AG04449 (cell line): ENCODE measurements at regions of chr16 and their contacts with region 1.

Region 1: GRCh38 chr16:88856828-88857733 is at the starts of genes GALNS and TRAPPC2L:
- DNase-seq: peak; percentile 29
- H3K4me3 ChIP-seq: peak within 1 kb of the TSS; percentile 99
- CTCF ChIP-seq: no peak

Region 2: GRCh38 chr16:88811769-88812512 is 45.1 kb before region 1 on chr16 and contains the start of gene APRT:
- CTCF ChIA-PET with region 1: interaction called, 20 read pairs
- POLR2A ChIA-PET with region 1: interaction called, 4 read pairs
- DNase-seq: peak; percentile 52
- H3K4me3 ChIP-seq: peak within 1 kb of the TSS; percentile 83
- CTCF ChIP-seq: peak; percentile 43

Region 3: DNA sequence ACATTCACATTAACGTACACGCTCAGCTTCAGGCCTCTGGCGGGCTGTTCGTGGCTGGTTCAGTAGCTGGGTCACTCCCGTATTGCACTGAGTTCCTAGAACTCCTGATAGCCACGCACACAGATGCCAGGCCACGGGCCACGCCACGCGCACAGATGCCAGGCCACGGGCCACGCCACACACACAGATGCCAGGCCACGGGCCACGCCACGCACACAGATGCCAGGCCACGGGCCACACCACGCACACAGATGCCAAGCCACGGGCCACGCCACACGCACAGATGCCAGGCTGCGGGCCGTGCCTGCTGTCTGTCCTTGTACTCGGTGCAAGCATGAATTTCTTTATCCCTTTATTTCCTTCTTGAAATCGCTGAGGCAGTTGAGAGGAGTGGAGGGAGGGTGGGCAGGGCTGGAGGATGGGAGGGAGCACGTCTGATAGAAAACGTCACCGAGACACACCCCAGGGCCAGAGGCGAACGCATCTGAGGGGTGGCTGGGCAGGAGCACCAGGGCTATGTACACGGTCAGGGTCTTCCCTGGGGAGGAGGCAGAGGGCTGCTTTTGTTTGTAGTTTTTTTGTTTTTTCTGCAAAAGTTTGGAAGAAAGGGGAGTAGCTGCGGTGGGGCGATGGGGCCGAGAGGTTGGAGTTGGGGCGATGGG is 18.0 kb after region 1 on chr16:
- CTCF ChIA-PET with region 1: interaction called, 12 read pairs
- POLR2A ChIA-PET with region 1: no interaction called
- DNase-seq: no peak
- H3K4me3 ChIP-seq: no peak overlapping the region
- CTCF ChIP-seq: no peak

Region 4: DNA sequence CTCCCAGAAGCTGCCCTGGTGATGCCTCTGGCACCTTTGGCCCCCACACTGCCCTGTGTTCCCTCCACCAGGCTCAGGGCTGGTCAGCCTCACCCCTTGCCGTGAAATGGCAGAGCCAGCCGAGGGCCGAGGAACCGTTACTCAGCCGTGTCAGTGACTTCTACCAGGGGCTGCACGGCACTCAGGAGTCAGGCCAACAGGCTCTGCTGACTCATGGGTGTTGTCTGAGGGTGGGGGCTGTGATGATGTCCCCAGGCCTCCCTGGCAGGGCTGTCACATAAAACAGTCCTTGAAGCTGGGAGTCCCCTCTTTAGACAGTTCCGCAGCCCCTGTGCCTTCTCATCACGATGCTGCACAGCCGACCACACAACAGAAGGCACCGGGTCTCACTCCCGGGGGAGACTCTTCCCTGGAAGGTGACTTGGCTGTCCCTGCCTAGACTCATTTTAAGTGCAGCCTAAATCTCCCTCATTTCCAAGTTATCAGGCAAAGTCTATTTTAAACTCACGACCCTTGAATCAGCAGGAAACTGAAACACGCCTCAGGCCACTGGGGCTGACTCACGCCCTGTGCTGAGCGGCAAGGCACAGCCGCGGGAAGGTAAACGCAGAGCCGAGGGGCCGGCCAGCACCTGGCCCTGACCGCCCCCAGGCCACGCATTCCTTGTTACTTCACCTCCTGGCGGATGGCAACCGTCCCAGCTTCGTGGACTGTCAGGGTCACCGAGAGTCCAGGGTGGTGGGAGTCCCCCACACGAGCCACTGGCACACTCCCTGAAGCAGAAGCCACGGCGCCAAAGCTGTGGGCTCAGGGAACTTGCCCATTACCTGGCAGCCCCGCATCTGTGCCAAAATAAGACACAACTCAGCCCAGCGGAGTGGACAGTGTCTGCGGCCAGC is 463.1 kb after region 1 on chr16:
- CTCF ChIA-PET with region 1: no interaction called
- POLR2A ChIA-PET with region 1: no interaction called
- DNase-seq: no peak
- H3K4me3 ChIP-seq: peak overlapping the region; percentile 31
- CTCF ChIP-seq: no peak